ENCODE measurements at regions of chr20 and their contacts with region 1.

Region 1: GRCh38 chr20:10219452-10219791 is 792 bp downstream of the SNAP25 start:
- DNase-seq: peak; percentile 53
- ATAC-seq: peak; percentile 64
- H3K4me3 ChIP-seq: peak overlapping the region; percentile 77
- H3K27ac ChIP-seq: no peak overlapping the region
- H3K4me1 ChIP-seq: peaks cover 2% of the 10 kb centered on the region; the same call in 1 of the 2 replicates
- H3K27me3 ChIP-seq: no peaks in the 10 kb centered on the region
- CTCF ChIP-seq: no peak
- POLR2A ChIP-seq: no peak
- RAD21 ChIP-seq: peak; percentile 24; the same call in 1 of the 2 replicates

Region 2: GRCh38 chr20:10090588-10091166 is 128.7 kb before region 1 on chr20:
- CTCF ChIA-PET with region 1: no interaction called
- POLR2A ChIA-PET with region 1: interaction called, 7 read pairs
- dilution Hi-C with region 1: no loop called
- in situ Hi-C with region 1: no loop called
- intact Hi-C with region 1: loop called (anchors 1 kb)
- DNase-seq: peak; percentile 53
- ATAC-seq: peak; percentile 90
- H3K4me3 ChIP-seq: no peak overlapping the region
- H3K27ac ChIP-seq: no peak overlapping the region
- H3K4me1 ChIP-seq: peaks cover 1% of the 10 kb centered on the region; the same call in 1 of the 2 replicates
- H3K27me3 ChIP-seq: no peaks in the 10 kb centered on the region; the same call in 1 of the 2 replicates
- CTCF ChIP-seq: peak; percentile 74
- POLR2A ChIP-seq: no peak
- RAD21 ChIP-seq: peak; percentile 70

Region 3: DNA sequence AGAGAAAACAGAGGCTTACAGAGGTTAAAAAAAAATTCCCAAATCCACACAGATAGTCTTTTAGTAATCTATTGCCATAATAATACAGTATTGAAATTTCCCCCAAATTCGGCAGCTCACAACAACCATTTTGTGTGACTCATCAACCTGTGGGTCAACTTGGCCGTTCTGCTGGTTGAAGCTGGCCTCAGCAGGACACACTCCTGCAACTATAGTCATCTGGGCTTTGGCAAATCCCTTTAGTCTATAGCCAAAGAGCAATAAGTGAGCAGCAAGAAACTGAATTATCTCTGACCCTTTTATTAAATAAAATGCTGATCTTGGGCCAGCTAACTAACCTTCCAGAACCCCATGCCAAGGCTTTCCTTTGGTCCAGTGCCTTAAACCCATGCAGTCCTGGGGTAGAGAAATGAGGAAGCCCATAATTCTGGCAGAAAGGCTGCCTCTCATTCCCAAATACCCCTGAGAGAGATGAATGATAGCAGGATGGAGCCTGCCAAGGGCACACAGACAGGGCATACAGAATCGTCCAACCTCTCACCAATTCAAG is 18.0 kb before region 1 on chr20:
- CTCF ChIA-PET with region 1: no interaction called
- POLR2A ChIA-PET with region 1: no interaction called
- dilution Hi-C with region 1: no loop called
- in situ Hi-C with region 1: no loop called
- intact Hi-C with region 1: loop called (anchors 2 kb)
- DNase-seq: peak; percentile 39
- ATAC-seq: 0 out of 2 replicates have a peak, but pooled peaks have one; percentile 27
- H3K4me3 ChIP-seq: no peak overlapping the region
- H3K27ac ChIP-seq: peak overlapping the region; percentile 14; the same call in 1 of the 2 replicates
- H3K4me1 ChIP-seq: no peaks in the 10 kb centered on the region
- H3K27me3 ChIP-seq: no peaks in the 10 kb centered on the region; the same call in 1 of the 2 replicates
- CTCF ChIP-seq: no peak
- POLR2A ChIP-seq: no peak
- RAD21 ChIP-seq: no peak

Region 4: DNA sequence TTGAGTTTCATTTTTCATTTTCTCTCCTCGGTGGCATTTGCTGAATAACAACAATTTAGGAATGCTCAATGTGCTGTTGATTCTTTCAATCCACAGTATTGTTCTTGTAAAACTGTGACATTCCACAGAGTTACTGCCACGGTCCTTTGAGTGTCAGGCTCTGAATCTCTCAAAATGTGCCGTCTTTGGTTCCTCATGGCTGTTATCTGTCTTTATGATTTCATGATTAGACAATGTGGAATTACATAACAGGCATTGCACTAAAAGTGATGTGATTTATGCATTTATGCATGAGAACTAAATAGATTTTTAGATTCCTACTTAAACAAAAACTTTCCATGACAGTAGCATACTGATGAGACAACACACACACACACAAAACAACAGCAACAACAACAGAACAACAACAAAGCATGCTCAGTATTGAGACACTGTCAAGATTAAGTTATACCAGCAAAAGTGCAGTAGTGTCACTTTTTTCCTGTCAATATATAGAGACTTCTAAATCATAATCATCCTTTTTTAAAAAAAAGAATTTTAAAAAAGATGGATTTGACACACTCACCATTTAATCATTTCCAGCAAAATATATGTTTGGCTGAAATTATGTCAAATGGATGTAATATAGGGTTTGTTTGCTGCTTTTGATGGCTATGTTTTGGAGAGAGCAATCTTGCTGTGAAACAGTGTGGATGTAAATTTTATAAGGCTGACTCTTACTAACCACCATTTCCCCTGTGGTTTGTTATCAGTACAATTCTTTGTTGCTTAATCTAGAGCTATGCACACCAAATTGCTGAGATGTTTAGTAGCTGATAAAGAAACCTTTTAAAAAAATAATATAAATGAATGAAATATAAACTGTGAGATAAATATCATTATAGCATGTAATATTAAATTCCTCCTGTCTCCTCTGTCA is 87.3 kb after region 1 on chr20:
- CTCF ChIA-PET with region 1: no interaction called
- POLR2A ChIA-PET with region 1: no interaction called
- dilution Hi-C with region 1: no loop called
- in situ Hi-C with region 1: no loop called
- intact Hi-C with region 1: loop called (anchors 5 kb)
- DNase-seq: peak; percentile 91
- ATAC-seq: peak; percentile 73
- H3K4me3 ChIP-seq: no peak overlapping the region
- H3K27ac ChIP-seq: 0 out of 2 replicates have a peak overlapping the region, but pooled peaks have one; percentile 12
- H3K4me1 ChIP-seq: peaks cover 25% of the 10 kb centered on the region
- H3K27me3 ChIP-seq: no peaks in the 10 kb centered on the region; the same call in 1 of the 2 replicates
- CTCF ChIP-seq: no peak
- POLR2A ChIP-seq: no peak
- RAD21 ChIP-seq: no peak

Region 5: GRCh38 chr20:10357974-10358373 is 138.6 kb after region 1 on chr20:
- CTCF ChIA-PET with region 1: interaction called, 4 read pairs
- POLR2A ChIA-PET with region 1: no interaction called
- dilution Hi-C with region 1: no loop called
- in situ Hi-C with region 1: no loop called
- intact Hi-C with region 1: loop called (anchors 2 kb)
- DNase-seq: peak; percentile 17
- ATAC-seq: peak; percentile 76
- H3K4me3 ChIP-seq: no peak overlapping the region
- H3K27ac ChIP-seq: no peak overlapping the region
- H3K4me1 ChIP-seq: peaks cover 4% of the 10 kb centered on the region; the same call in 1 of the 2 replicates
- H3K27me3 ChIP-seq: no peaks in the 10 kb centered on the region; the same call in 1 of the 2 replicates
- CTCF ChIP-seq: peak; percentile 72
- POLR2A ChIP-seq: no peak
- RAD21 ChIP-seq: peak; percentile 68

Region 6: GRCh38 chr20:10427060-10427692 is 207.8 kb after region 1 on chr20:
- CTCF ChIA-PET with region 1: no interaction called
- POLR2A ChIA-PET with region 1: no interaction called
- dilution Hi-C with region 1: no loop called
- in situ Hi-C with region 1: no loop called
- intact Hi-C with region 1: loop called (anchors 2 kb)
- DNase-seq: peak; percentile 74
- ATAC-seq: peak; percentile 81
- H3K4me3 ChIP-seq: no peak overlapping the region
- H3K27ac ChIP-seq: no peak overlapping the region
- H3K4me1 ChIP-seq: peaks cover 2% of the 10 kb centered on the region; the same call in 1 of the 2 replicates
- H3K27me3 ChIP-seq: no peaks in the 10 kb centered on the region
- CTCF ChIP-seq: peak; percentile 83
- POLR2A ChIP-seq: no peak
- RAD21 ChIP-seq: peak; percentile 83

Region 7: DNA sequence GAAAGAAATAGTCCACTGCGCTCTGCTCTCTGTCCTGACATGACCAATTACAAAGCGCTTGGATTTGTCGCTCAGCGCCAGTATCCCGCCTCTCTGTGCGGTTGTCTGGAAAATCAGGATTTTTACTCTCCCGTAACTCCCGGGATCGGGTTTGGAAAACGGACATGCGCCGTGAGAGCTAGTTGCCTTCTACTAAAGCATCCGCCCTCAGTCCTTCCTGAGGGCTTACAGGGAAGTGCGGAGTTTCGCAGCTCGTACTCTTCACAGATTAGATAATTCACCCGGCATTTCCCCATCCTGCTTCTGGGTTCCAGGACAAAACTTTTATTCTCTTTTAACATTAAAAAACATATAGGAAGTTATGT is 215.0 kb after region 1 on chr20:
- CTCF ChIA-PET with region 1: no interaction called
- POLR2A ChIA-PET with region 1: interaction called, 3 read pairs
- dilution Hi-C with region 1: no loop called
- in situ Hi-C with region 1: no loop called
- intact Hi-C with region 1: loop called (anchors 2 kb)
- DNase-seq: peak; percentile 99
- ATAC-seq: peak; percentile 87
- H3K4me3 ChIP-seq: peak overlapping the region; percentile 89
- H3K27ac ChIP-seq: peak overlapping the region; percentile 33; the same call in 1 of the 2 replicates
- H3K4me1 ChIP-seq: peaks cover 2% of the 10 kb centered on the region; the same call in 1 of the 2 replicates
- H3K27me3 ChIP-seq: no peaks in the 10 kb centered on the region
- CTCF ChIP-seq: no peak
- POLR2A ChIP-seq: peak; percentile 95
- RAD21 ChIP-seq: no peak

Region 8: DNA sequence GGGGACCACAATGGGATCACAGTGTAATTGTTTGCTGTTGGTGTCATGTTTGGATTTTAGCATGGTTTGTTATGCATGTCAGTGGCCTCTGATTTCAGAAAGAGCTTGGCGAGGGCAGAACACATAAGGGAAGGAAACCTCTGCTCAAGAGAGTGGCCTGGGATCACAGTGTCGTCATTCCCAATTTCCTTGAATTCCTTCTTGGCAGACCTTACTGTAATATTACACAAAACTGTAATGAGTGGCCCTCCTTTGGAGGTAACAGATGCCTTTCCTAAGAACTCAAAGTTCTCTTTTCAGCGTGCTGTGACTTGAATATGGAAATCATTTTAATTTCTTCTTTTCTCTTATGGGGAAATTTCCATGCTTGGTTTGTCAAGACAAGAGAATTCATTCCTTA is 407.5 kb after region 1 on chr20:
- CTCF ChIA-PET with region 1: no interaction called
- POLR2A ChIA-PET with region 1: no interaction called
- dilution Hi-C with region 1: no loop called
- in situ Hi-C with region 1: no loop called
- intact Hi-C with region 1: no loop called
- DNase-seq: no peak
- ATAC-seq: no peak
- H3K4me3 ChIP-seq: no peak overlapping the region
- H3K27ac ChIP-seq: no peak overlapping the region
- H3K4me1 ChIP-seq: peaks cover 12% of the 10 kb centered on the region
- H3K27me3 ChIP-seq: no peaks in the 10 kb centered on the region
- CTCF ChIP-seq: no peak
- POLR2A ChIP-seq: no peak
- RAD21 ChIP-seq: no peak